SK-N-SH (cell line): ENCODE measurements at regions of chr3 and their contacts with region 1.

Region 1: GRCh38 chr3:197906023-197906849 is 43.8 kb upstream of the RPL35A start:
- DNase-seq: peak; percentile 87
- H3K4me3 ChIP-seq: no peak overlapping the region; a peak in 1 of 4 replicates
- H3K27ac ChIP-seq: peak overlapping the region in 1 of 2 experiments; percentile 32; a peak in 1 of 4 replicates
- H3K4me1 ChIP-seq: peaks cover 0 to 10% of the 10 kb centered on the region in 2 experiments; a peak in 1 of 4 replicates
- H3K27me3 ChIP-seq: no peaks in the 10 kb centered on the region
- CTCF ChIP-seq: peak; percentile 95
- EP300 ChIP-seq: no peak
- RAD21 ChIP-seq: peak; percentile 94

Region 2: DNA sequence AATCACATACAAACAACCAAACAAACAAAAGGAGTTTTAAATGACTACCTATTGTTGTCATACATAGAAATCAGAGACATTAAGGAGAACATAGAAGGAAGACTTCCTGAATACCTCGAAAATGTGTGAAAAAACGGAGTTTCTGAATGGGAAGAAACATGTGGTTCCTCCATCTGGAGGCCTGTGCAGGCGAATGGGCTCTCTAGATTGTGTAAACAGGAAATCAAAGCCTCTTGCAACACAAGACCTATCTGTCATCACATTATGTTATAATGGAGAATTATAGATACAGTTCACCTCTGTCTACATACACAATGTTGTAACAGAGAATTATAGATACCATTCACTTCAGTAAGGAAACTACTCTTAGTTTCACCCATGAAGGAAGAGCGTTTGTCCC is 213.6 kb before region 1 on chr3:
- CTCF ChIA-PET with region 1: no interaction called
- POLR2A ChIA-PET with region 1: no interaction called
- DNase-seq: no peak
- H3K4me3 ChIP-seq: no peak overlapping the region
- H3K27ac ChIP-seq: no peak overlapping the region
- H3K4me1 ChIP-seq: no peaks in the 10 kb centered on the region
- H3K27me3 ChIP-seq: no peaks in the 10 kb centered on the region
- CTCF ChIP-seq: no peak
- EP300 ChIP-seq: no peak
- RAD21 ChIP-seq: no peak

Region 3: DNA sequence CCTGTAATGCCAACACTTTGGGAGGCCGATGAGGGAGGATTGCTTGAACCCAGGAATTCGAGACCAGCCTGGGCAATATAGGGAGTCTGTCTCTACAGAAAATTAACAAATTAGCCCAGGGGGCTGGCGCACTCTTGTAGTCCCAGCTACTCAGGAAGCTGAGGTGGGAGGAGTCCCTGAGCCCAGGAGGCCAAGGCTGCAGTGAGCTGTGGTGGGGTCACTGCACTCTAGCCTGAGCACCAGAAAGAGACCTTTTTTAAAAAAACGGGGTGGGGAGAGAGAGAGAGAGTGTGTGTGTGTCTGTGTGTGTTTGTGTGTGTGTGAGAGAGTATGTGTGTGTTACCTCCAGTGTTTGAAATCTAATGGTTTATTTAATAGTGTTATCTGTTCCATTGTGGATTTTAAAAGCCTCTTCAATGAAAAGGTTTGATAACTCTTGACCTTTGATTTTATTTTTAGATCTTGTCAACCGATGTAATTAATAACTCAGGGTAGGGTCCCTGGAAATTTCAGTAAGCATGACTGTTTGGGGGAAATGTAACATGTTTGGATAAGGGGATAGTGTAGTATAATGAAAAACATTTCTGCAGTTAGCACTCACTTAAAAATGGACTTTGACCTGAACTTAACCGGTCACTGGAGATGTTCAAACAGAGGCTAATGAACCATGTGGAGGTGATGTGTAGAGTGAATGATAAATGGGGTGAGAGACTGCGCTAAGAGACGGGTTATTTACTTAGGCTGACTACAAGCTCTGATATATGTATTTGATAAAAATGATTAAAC is 85.5 kb before region 1 on chr3:
- CTCF ChIA-PET with region 1: no interaction called
- POLR2A ChIA-PET with region 1: no interaction called
- DNase-seq: no peak
- H3K4me3 ChIP-seq: no peak overlapping the region
- H3K27ac ChIP-seq: no peak overlapping the region
- H3K4me1 ChIP-seq: 0 out of 4 replicates have a peak, but pooled peaks cover 0 to 3% of the 10 kb centered on the region in 2 experiments
- H3K27me3 ChIP-seq: no peaks in the 10 kb centered on the region
- CTCF ChIP-seq: no peak
- EP300 ChIP-seq: no peak
- RAD21 ChIP-seq: no peak

Region 4: GRCh38 chr3:197889204-197889930 is 16.9 kb before region 1 on chr3:
- CTCF ChIA-PET with region 1: interaction called, 24 read pairs
- POLR2A ChIA-PET with region 1: no interaction called
- DNase-seq: no peak
- H3K4me3 ChIP-seq: no peak overlapping the region
- H3K27ac ChIP-seq: no peak overlapping the region
- H3K4me1 ChIP-seq: no peaks in the 10 kb centered on the region
- H3K27me3 ChIP-seq: no peaks in the 10 kb centered on the region
- CTCF ChIP-seq: no peak
- EP300 ChIP-seq: no peak
- RAD21 ChIP-seq: no peak

Region 5: GRCh38 chr3:197936819-197937384 is 30.7 kb after region 1 on chr3:
- CTCF ChIA-PET with region 1: interaction called, 59 read pairs
- POLR2A ChIA-PET with region 1: no interaction called
- DNase-seq: no peak
- H3K4me3 ChIP-seq: no peak overlapping the region
- H3K27ac ChIP-seq: no peak overlapping the region
- H3K4me1 ChIP-seq: no peaks in the 10 kb centered on the region
- H3K27me3 ChIP-seq: no peaks in the 10 kb centered on the region
- CTCF ChIP-seq: no peak
- EP300 ChIP-seq: no peak
- RAD21 ChIP-seq: no peak

Region 6: GRCh38 chr3:197942956-197943556 is 36.8 kb after region 1 on chr3:
- CTCF ChIA-PET with region 1: interaction called, 59 read pairs
- POLR2A ChIA-PET with region 1: no interaction called
- DNase-seq: peak; percentile 65
- H3K4me3 ChIP-seq: no peak overlapping the region; a peak in 1 of 4 replicates
- H3K27ac ChIP-seq: no peak overlapping the region
- H3K4me1 ChIP-seq: no peaks in the 10 kb centered on the region
- H3K27me3 ChIP-seq: no peaks in the 10 kb centered on the region
- CTCF ChIP-seq: peak; percentile 85
- EP300 ChIP-seq: no peak
- RAD21 ChIP-seq: peak; percentile 61

Region 7: DNA sequence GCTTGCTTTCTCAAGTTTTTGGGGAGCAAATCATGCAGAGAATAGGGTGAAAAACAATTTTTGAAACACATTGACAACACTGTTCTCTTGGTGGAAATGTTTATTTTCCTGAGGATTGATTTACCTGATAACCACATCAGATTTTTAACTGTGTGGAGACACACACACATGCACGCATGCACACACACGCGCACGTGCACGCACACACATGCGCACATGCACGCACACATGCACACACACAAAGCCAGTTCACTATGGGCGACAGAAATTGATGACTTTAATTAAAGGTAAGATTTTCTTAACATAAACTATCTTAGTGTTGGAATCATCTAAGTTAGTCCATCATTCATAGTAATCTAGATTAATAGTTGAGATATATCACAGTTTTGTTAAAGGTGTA is 69.1 kb after region 1 on chr3:
- CTCF ChIA-PET with region 1: no interaction called
- POLR2A ChIA-PET with region 1: no interaction called
- DNase-seq: no peak
- H3K4me3 ChIP-seq: no peak overlapping the region
- H3K27ac ChIP-seq: no peak overlapping the region
- H3K4me1 ChIP-seq: no peaks in the 10 kb centered on the region
- H3K27me3 ChIP-seq: no peaks in the 10 kb centered on the region
- CTCF ChIP-seq: no peak
- EP300 ChIP-seq: no peak
- RAD21 ChIP-seq: no peak

Region 8: DNA sequence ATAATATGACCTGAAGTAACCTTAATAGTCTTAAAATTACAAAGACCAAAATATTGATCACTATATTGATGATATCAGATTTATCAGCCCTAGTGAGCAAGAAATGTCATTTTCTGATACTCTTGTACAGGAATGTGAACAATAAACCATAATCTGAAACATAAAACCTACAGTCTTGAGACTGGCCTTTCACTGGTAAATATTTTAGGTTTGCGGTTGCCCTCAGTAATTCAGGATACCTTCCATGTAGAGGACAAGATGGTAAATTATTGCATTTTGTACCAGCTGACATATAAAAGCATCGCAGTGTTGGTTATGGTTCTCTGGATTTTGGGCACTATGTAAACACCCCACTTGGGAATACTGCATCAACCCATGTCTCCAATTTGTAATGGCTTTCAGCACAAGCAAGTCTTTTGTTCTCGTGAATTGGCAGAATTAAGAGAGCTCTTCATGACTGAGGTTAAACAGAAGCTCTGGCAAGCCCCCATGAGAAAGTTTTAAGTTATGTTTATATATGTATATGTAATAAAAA is 182.3 kb after region 1 on chr3:
- CTCF ChIA-PET with region 1: interaction called, 10 read pairs
- POLR2A ChIA-PET with region 1: no interaction called
- DNase-seq: no peak
- H3K4me3 ChIP-seq: no peak overlapping the region
- H3K27ac ChIP-seq: no peak overlapping the region
- H3K4me1 ChIP-seq: no peaks in the 10 kb centered on the region
- H3K27me3 ChIP-seq: peaks cover 43% of the 10 kb centered on the region; the same call in 1 of the 2 replicates
- CTCF ChIP-seq: no peak
- EP300 ChIP-seq: no peak
- RAD21 ChIP-seq: no peak